Panc1 (cell line): ENCODE measurements at regions of chr2 and their contacts with region 1.

Region 1: DNA sequence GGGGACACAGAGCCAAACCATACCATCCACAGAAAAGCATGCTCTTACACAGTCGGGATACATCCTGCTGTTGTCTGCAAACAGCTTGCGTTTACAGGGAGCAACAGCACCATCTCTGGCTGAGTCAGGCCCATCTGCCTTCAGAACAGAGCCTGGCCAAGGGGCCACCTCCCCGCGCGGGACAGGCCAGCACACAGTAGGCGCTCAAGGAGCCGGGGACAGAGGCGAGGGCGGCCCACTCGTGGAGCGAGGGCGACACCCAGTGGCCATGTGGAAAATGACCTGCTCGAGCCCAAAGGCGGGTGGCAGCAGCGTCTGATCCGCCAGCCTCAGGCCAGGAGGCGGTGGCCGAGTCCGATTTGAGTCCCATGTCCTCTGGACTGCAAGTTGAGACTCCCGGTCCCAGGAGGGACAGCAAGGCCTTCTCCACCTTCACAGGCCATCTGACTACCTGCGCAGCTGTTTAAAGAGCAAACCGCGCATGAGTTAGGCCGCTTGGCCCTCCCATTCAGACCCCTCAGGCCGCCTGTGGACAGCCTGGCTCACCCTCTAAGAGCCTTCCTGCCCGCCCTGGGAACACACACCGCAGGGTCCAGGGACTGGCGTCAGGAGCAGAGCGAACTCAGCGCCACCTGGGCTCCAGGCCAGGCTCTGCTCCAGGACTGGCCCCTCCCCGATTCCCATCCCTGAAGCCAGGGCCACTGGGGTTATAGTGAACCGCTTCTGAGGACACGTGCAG is 38.3 kb downstream of the TTC32 start:
- DNase-seq: peak; percentile 27
- ATAC-seq: peak; percentile 92
- H3K4me3 ChIP-seq: peak overlapping the region in 1 of 2 experiments; percentile 43; a peak in 2 of 4 replicates
- H3K27ac ChIP-seq: peak overlapping the region; percentile 57
- H3K4me1 ChIP-seq: 0 out of 2 replicates have a peak, but pooled peaks cover 2% of the 10 kb centered on the region
- H3K27me3 ChIP-seq: no peaks in the 10 kb centered on the region
- CTCF ChIP-seq: peak; percentile 95

Region 2: GRCh38 chr2:18520451-18521425 is 1342.7 kb before region 1 on chr2:
- CTCF ChIA-PET with region 1: no interaction called
- POLR2A ChIA-PET with region 1: no interaction called
- in situ Hi-C with region 1: no loop called
- intact Hi-C with region 1: loop called (anchors 2 kb)
- DNase-seq: peak; percentile 50
- ATAC-seq: peak; percentile 95
- H3K4me3 ChIP-seq: no peak overlapping the region; a peak in 1 of 4 replicates
- H3K27ac ChIP-seq: no peak overlapping the region
- H3K4me1 ChIP-seq: peaks cover 3% of the 10 kb centered on the region; the same call in 1 of the 2 replicates
- H3K27me3 ChIP-seq: no peaks in the 10 kb centered on the region; the same call in 1 of the 2 replicates
- CTCF ChIP-seq: peak; percentile 95

Region 3: GRCh38 chr2:18749912-18750526 is 1113.5 kb before region 1 on chr2:
- CTCF ChIA-PET with region 1: no interaction called
- POLR2A ChIA-PET with region 1: no interaction called
- in situ Hi-C with region 1: no loop called
- intact Hi-C with region 1: loop called (anchors 5 kb)
- DNase-seq: no peak
- ATAC-seq: no peak
- H3K4me3 ChIP-seq: no peak overlapping the region
- H3K27ac ChIP-seq: no peak overlapping the region
- H3K4me1 ChIP-seq: 0 out of 2 replicates have a peak, but pooled peaks cover 9% of the 10 kb centered on the region
- H3K27me3 ChIP-seq: no peaks in the 10 kb centered on the region
- CTCF ChIP-seq: peak; percentile 75; the same call in 1 of the 2 replicates

Region 4: DNA sequence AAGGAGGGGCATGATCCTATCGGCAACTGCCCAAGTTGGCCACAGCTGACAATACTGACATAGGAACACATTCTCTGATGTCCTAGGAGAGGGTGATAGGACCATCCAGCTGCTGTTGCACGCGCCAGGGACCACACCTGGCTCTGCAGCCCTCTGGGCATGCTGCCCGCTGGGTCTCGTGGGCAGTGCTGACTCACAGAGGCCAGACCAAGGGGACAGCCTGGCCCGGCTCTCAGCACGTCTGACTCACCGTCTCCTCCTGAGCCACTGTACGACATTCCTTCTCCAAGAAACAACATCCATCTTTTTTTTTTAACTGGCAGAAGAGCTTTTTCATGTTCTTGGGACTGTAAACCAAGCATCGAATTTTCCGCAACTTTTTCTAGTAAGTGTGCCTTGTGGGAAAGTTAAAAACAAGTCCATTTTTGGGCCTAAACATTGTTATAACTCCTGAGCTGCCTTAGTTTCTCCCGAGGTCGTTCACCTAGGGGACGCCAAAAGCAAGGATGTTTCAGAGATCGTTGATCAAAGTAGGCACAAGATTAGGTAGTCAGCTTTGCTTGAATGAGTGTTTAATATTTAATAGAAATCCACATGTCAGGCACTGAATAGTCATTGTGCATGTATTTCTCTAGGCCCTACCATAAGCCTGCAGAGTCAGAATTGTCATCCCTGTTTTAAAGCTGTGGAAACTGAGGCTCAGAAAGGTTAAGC is 61.9 kb before region 1 on chr2:
- CTCF ChIA-PET with region 1: no interaction called
- POLR2A ChIA-PET with region 1: no interaction called
- in situ Hi-C with region 1: no loop called
- intact Hi-C with region 1: no loop called
- DNase-seq: peak; percentile 81
- ATAC-seq: peak; percentile 98
- H3K4me3 ChIP-seq: no peak overlapping the region
- H3K27ac ChIP-seq: peak overlapping the region; percentile 86
- H3K4me1 ChIP-seq: peaks cover 37% of the 10 kb centered on the region
- H3K27me3 ChIP-seq: no peaks in the 10 kb centered on the region
- CTCF ChIP-seq: no peak

Region 5: DNA sequence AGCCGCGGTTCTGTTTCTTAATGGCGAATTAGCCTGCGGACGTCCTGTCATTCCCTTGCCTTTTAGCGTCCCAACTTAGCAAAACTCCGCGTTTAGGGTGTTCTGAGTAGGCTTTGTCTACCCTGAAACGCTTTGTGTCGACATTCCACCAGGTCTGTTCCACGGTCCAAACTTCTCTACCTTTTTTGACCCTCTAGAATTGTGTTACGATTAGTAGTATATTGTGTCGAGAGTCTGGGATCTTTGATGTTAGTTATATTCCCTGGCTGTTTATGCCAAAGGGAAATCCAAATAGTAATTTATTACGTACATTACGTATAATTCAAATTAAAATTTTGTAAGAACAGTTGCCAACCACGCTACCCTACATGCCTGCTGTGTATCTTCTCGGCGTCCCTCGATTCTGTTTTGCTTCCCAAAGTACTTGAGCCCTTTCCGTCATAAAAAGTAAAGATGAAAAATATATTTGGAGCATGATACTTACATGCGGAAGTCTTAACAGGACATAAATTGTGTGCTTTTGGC is 38.8 kb after region 1 on chr2:
- CTCF ChIA-PET with region 1: no interaction called
- POLR2A ChIA-PET with region 1: interaction called, 10 read pairs
- in situ Hi-C with region 1: no loop called
- intact Hi-C with region 1: no loop called
- DNase-seq: no peak
- ATAC-seq: no peak; the same call in 1 of the 2 replicates
- H3K4me3 ChIP-seq: peak overlapping the region; percentile 65 to 98
- H3K27ac ChIP-seq: peak overlapping the region; percentile 94
- H3K4me1 ChIP-seq: peaks cover 33% of the 10 kb centered on the region
- H3K27me3 ChIP-seq: no peaks in the 10 kb centered on the region
- CTCF ChIP-seq: no peak